Activated T-helper 1 cell treated with anti-CD3 and anti-CD28 coated beads, Interleukin-12 subunit alpha, Interleukin-12 subunit beta, Interleukin-2, Interleukin-4 antibody, amounts not matched to agents 30 ng/mL and 10 ng/mL and 1 ng/mL, durations not matched to agents 14 hours and 24 hours and 36 hours (primary cell): ENCODE measurements at regions of chr22 and their contacts with region 1.

Region 1: GRCh38 chr22:25747245-25747944 is 5.4 kb downstream of the MYO18B start:
- DNase-seq: no peak
- H3K4me3 Mint-ChIP-seq: no peak overlapping the region
- H3K27ac Mint-ChIP-seq: peak overlapping the region; percentile 99
- H3K4me1 Mint-ChIP-seq: peaks cover 84% of the 10 kb centered on the region
- H3K27me3 Mint-ChIP-seq: no peaks in the 10 kb centered on the region

Region 2: DNA sequence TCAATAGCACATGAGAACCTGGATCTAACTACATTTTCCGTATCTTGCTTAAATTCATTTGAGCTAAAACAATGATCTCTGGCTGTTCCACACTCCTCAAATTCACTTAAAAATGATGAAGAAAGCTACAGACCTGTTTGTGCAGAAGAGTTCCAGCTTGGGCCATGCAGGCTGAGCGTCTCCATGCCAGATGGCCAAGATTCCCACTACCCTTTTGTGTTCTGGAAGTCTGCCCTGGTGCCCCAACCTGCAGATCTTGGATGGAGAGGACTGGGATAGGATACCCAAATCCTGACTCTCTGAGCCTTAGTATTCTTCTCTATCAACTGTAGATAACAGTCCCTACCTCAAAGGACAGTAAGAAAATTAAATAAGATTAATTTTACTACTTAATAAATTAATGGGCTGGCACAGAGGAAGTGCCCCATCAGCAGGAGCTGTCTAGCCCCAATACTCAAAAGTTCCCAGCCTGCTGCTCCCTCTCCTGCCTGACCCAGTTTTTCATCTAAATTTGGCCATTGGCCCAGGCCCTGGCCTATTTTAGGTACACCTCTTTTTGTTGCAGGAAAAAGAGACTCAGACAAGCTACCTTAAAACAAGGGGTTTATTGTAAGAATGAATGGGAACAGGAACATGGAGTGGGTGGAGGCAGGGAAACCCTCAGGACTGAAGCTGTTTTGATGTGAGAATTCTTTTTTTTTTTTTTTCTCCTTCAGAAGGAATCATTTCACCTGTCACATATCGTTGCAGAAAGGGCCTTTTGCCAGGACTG is 264.3 kb before region 1 on chr22:
- intact Hi-C with region 1: loop called (anchors 1 kb)
- DNase-seq: no peak
- H3K4me3 Mint-ChIP-seq: no peak overlapping the region
- H3K27ac Mint-ChIP-seq: peak overlapping the region; percentile 80
- H3K4me1 Mint-ChIP-seq: peaks cover 48% of the 10 kb centered on the region
- H3K27me3 Mint-ChIP-seq: no peaks in the 10 kb centered on the region

Region 3: GRCh38 chr22:25572708-25573171 is 174.7 kb before region 1 on chr22:
- intact Hi-C with region 1: loop called (anchors 5 kb)
- DNase-seq: no peak
- H3K4me3 Mint-ChIP-seq: peak overlapping the region; percentile 3
- H3K27ac Mint-ChIP-seq: peak overlapping the region; percentile 46
- H3K4me1 Mint-ChIP-seq: peaks cover 69% of the 10 kb centered on the region
- H3K27me3 Mint-ChIP-seq: no peaks in the 10 kb centered on the region

Region 4: GRCh38 chr22:25702040-25702439 is 45.4 kb before region 1 on chr22:
- intact Hi-C with region 1: loop called (anchors 1 kb)
- DNase-seq: no peak
- H3K4me3 Mint-ChIP-seq: peak overlapping the region; percentile 75
- H3K27ac Mint-ChIP-seq: peak overlapping the region; percentile 36
- H3K4me1 Mint-ChIP-seq: peaks cover 68% of the 10 kb centered on the region
- H3K27me3 Mint-ChIP-seq: no peaks in the 10 kb centered on the region

Region 5: GRCh38 chr22:25736378-25737011 is 10.9 kb before region 1 on chr22:
- intact Hi-C with region 1: loop called (anchors 1 kb)
- DNase-seq: peak; percentile 71
- H3K4me3 Mint-ChIP-seq: peak overlapping the region; percentile 71
- H3K27ac Mint-ChIP-seq: peak overlapping the region; percentile 98
- H3K4me1 Mint-ChIP-seq: peaks cover 64% of the 10 kb centered on the region
- H3K27me3 Mint-ChIP-seq: peaks cover 2% of the 10 kb centered on the region

Region 6: GRCh38 chr22:25953919-25954318 is 206.5 kb after region 1 on chr22:
- intact Hi-C with region 1: no loop called
- DNase-seq: no peak
- H3K4me3 Mint-ChIP-seq: no peak overlapping the region
- H3K27ac Mint-ChIP-seq: no peak overlapping the region
- H3K4me1 Mint-ChIP-seq: no peaks in the 10 kb centered on the region
- H3K27me3 Mint-ChIP-seq: no peaks in the 10 kb centered on the region